ENCODE measurements at regions of chr17 and their contacts with region 1.

Region 1: GRCh38 chr17:7435221-7435675 is at the start of gene TMEM102:
- DNase-seq: peak; percentile 95
- H3K4me3 ChIP-seq: peak within 1 kb of the TSS; percentile 67 to 86
- H3K27ac ChIP-seq: peak within 1 kb of the TSS in 1 of 2 experiments; percentile 55; a peak in 1 of 4 replicates
- H3K4me1 ChIP-seq: peaks cover 0 to 16% of the 10 kb centered on the region in 2 experiments; a peak in 1 of 4 replicates
- H3K27me3 ChIP-seq: no peaks in the 10 kb centered on the region
- CTCF ChIP-seq: no peak
- EP300 ChIP-seq: no peak
- RAD21 ChIP-seq: no peak
- polyA plus RNA-seq, gene TMEM102: 6.5 and 6.6 TPM in 2 replicates

Region 2: DNA sequence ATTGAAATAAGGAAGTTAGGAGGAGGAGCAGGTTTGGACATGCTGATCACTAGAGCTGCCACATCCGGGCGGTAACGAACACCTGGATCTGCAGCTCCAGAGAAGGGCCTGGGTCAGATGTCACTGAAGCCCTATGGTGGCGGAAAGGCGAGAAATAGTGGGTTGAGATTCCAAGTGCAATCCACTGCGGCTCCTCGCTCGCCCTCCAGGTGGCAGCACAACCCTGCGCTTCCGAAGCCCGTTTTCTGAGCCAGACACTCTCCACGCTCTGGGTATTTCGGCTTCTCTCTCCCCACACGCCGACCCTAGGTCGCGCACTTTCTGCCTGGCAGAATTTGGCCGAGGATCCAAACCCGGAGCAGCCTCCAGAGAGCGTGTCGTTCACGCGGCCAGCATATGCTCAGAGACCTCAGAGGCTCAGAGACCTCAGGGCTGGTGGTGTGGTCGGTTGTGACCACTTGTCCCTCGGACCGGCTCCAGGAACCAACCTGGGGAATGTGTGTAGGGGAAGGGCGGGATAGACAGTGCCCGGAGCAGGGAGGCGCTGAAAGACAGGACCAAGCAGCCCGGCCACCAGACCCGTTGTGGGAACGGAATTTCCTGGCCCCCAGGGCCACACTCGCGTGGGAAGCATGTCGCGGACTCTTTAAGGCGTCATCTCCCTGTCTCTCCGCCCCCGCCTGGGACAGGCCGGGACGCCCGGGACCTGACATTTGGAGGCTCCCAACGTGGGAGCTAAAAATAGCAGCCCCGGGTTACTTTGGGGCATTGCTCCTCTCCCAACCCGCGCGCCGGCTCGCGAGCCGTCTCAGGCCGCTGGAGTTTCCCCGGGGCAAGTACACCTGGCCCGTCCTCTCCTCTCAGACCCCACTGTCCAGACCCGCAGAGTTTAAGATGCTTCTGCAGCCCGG is 154.5 kb before region 1 on chr17:
- CTCF ChIA-PET with region 1: no interaction called
- POLR2A ChIA-PET with region 1: no interaction called
- DNase-seq: peak; percentile 84
- H3K4me3 ChIP-seq: peak overlapping the region; percentile 50 to 64
- H3K27ac ChIP-seq: peak overlapping the region in 1 of 2 experiments; percentile 52; a peak in 1 of 4 replicates
- H3K4me1 ChIP-seq: peaks cover 6 to 18% of the 10 kb centered on the region in 2 experiments; a peak in 2 of 4 replicates
- H3K27me3 ChIP-seq: no peaks in the 10 kb centered on the region
- CTCF ChIP-seq: peak; percentile 72
- EP300 ChIP-seq: no peak
- RAD21 ChIP-seq: peak; percentile 93

Region 3: DNA sequence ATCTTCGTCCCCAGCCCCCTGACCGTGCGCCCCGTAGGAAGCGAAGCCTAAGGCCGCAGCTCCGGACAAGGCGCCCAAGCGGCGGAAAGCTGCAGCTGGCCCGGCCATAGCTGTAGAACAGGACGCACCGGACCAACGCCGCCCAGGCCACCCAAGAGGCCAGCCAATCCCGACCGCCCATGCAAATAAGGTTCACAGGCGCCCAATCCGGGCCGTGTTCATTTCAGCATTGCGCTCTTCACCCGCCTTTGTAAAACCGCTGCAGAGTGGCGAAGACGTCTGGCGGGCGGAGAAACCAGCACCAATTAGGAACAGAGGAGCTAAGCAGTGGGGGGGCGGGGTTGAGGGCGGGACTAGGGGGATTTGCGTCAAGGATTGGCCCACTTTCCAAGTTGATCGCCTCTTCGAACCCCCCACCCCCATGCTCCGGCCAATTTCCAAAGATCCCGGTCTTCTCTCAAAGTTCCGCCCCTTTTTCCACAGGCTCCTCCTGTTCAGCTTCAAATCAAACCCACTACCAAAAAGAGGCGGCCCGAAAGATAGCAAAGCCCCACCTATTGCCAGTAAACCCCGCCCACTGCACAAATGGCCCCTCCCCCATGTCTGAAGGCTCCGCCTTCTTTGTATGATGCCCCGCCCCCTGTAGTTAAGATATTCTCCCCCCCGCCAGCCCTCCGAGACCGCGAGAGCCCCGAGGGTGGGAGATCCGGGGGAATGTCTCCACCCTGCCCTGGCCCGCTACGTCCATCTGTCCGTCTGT is 31.1 kb before region 1 on chr17 and contains the start of gene TMEM256:
- CTCF ChIA-PET with region 1: interaction called, 19 read pairs
- POLR2A ChIA-PET with region 1: interaction called, 13 read pairs
- DNase-seq: peak; percentile 93
- H3K4me3 ChIP-seq: peak within 1 kb of the TSS; percentile 78 to 91
- H3K27ac ChIP-seq: peak within 1 kb of the TSS; percentile 76 to 91
- H3K4me1 ChIP-seq: peaks cover 5 to 21% of the 10 kb centered on the region in 2 experiments; a peak in 2 of 4 replicates
- H3K27me3 ChIP-seq: no peaks in the 10 kb centered on the region
- CTCF ChIP-seq: no peak
- EP300 ChIP-seq: 0 out of 4 replicates have a peak, but pooled peaks of 1 of the 2 experiments have one; percentile 24
- RAD21 ChIP-seq: no peak
- polyA plus RNA-seq, gene TMEM256: 114 and 213 TPM in 2 replicates

Region 4: GRCh38 chr17:7454980-7455379 is 19.7 kb after region 1 on chr17:
- CTCF ChIA-PET with region 1: interaction called, 15 read pairs
- POLR2A ChIA-PET with region 1: no interaction called
- DNase-seq: no peak
- H3K4me3 ChIP-seq: peak overlapping the region; percentile 61 to 74; a peak in 3 of 4 replicates
- H3K27ac ChIP-seq: no peak overlapping the region; a peak in 1 of 4 replicates
- H3K4me1 ChIP-seq: peaks cover 0 to 5% of the 10 kb centered on the region in 2 experiments; a peak in 1 of 4 replicates
- H3K27me3 ChIP-seq: no peaks in the 10 kb centered on the region
- CTCF ChIP-seq: no peak
- EP300 ChIP-seq: no peak
- RAD21 ChIP-seq: no peak

Region 5: DNA sequence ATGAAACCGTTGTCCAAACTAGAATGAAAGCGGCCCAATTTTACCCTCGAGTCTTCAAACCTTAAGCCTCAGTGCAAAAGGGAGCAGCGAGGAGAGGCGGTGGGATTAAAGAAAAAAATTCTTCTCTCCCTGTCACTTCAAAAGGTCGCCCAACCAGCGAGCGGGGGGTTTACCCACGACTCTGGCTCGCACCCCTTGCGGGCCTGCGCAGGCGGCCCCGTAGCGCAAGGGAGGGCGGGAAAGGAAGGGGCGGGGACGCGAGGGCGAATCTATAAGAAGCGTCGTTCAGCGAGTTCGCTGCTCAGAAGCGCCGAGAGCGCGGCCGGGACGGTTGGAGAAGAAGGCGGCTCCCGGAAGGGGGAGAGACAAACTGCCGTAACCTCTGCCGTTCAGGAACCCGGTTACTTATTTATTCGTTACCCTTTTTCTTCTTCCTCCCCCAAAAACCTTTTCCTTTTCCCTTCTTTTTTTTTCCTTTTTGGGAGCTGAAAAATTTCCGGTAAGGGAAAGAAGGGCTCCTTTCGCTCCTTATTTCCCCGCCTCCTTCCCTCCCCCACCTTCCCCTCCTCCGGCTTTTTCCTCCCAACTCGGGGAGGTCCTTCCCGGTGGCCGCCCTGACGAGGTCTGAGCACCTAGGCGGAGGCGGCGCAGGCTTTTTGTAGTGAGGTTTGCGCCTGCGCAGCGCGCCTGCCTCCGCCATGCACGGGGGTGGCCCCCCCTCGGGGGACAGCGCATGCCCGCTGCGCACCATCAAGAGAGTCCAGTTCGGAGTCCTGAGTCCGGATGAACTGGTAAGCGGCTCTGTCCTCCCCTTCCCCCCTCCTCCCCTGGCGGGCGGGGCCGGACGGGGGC is 49.0 kb after region 1 on chr17 and contains the start of gene POLR2A:
- CTCF ChIA-PET with region 1: interaction called, 22 read pairs
- POLR2A ChIA-PET with region 1: interaction called, 19 read pairs
- DNase-seq: peak; percentile 98
- H3K4me3 ChIP-seq: peak within 1 kb of the TSS; percentile 85 to 100
- H3K27ac ChIP-seq: peak within 1 kb of the TSS; percentile 99
- H3K4me1 ChIP-seq: peaks cover 31 to 34% of the 10 kb centered on the region in 2 experiments
- H3K27me3 ChIP-seq: no peaks in the 10 kb centered on the region
- CTCF ChIP-seq: no peak
- EP300 ChIP-seq: peak in 1 of 2 experiments; percentile 2; a peak in 2 of 4 replicates
- RAD21 ChIP-seq: 0 out of 2 replicates have a peak, but pooled peaks have one; percentile 13
- polyA plus RNA-seq, gene POLR2A: 19.0 and 37.3 TPM in 2 replicates

Measured in SK-N-SH (cell line).